Right ventricle myocardium inferior (tissue), 1 donor: ENCODE measurements at regions of chr5 and their contacts with region 1.

Region 1: DNA sequence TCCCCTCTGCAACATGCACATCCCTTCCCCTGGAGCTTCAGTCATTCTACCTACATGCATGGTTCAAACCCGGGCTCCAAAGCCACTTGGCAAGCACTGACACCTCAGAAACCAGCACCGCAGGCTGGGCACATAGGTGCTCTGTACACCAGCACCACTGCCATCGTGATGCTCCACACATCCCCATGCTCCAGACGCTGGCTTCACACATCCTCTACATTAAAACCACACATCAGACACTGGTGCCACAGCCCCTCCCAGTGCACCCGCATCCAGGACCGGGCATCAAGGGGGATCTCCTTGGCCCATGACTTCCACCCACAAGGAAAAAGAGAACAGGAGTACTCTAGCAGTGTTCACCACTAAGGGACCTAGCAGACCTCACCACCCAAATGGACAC is 787.7 kb downstream of the CDH18 start:
- DNase-seq: no peak
- ATAC-seq: no peak

Region 2: GRCh38 chr5:19210886-19211285 is 10.6 kb after region 1 on chr5:
- intact Hi-C with region 1: loop called (anchors 2 kb)
- DNase-seq: no peak
- ATAC-seq: no peak